A673 (cell line): ENCODE measurements at regions of chr9 and their contacts with region 1.

Region 1: GRCh38 chr9:78261403-78262001 is 25.6 kb downstream of the CEP78 start:
- DNase-seq: peak; percentile 44
- H3K4me3 ChIP-seq: no peak overlapping the region
- H3K27ac ChIP-seq: no peak overlapping the region
- H3K4me1 ChIP-seq: no peaks in the 10 kb centered on the region
- H3K27me3 ChIP-seq: no peaks in the 10 kb centered on the region
- CTCF ChIP-seq: peak; percentile 70

Region 2: DNA sequence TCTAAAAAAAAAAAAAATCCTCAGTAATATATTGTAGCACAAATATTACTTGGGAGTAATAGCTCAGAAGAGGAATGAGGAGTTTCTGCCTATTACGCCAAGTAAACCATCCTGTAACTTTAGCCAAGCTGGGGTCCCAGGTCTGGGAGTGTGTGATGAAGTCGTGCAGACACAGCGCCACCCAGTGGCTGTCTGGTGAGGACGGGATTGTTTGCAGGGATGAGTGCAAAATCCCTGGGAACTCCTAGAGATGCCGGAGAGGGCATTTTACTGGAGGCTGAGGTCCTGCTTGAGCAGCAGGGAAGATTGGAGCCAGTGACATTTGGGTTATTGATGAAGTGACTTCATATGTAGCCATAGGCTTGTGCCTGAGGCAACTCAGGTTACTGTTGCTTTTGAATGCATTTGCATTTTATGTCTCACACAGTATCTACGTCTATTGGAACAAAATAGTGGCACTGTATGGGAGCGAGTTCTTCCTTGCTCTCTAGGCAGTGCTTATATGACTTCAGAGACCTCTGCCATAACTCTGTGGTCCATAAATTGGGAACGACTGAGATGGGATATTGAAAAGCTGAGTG is 108.2 kb after region 1 on chr9:
- CTCF ChIA-PET with region 1: no interaction called
- POLR2A ChIA-PET with region 1: no interaction called
- intact Hi-C with region 1: loop called (anchors 2 kb)
- DNase-seq: peak; percentile 84
- H3K4me3 ChIP-seq: no peak overlapping the region
- H3K27ac ChIP-seq: no peak overlapping the region
- H3K4me1 ChIP-seq: no peaks in the 10 kb centered on the region
- H3K27me3 ChIP-seq: no peaks in the 10 kb centered on the region
- CTCF ChIP-seq: peak; percentile 97

Region 3: GRCh38 chr9:79089054-79089560 is 827.6 kb after region 1 on chr9:
- CTCF ChIA-PET with region 1: no interaction called
- POLR2A ChIA-PET with region 1: no interaction called
- intact Hi-C with region 1: no loop called
- DNase-seq: no peak
- H3K4me3 ChIP-seq: no peak overlapping the region
- H3K27ac ChIP-seq: no peak overlapping the region
- H3K4me1 ChIP-seq: no peaks in the 10 kb centered on the region
- H3K27me3 ChIP-seq: peaks cover 15% of the 10 kb centered on the region
- CTCF ChIP-seq: no peak